Activated CD8-positive, alpha-beta T cell treated with anti-CD3 and anti-CD28 coated beads, Interleukin-2, amount 10 ng/mL, durations not matched to agents 7 days and 5 days (primary cell): ENCODE measurements at regions of chr1 and their contacts with region 1.

Region 1: GRCh38 chr1:155244368-155245162 is 10.7 kb downstream of the ENTREP3 start:
- DNase-seq: peak; percentile 100
- ATAC-seq: peak; percentile 97
- H3K4me3 Mint-ChIP-seq: peak overlapping the region; percentile 69
- H3K27ac Mint-ChIP-seq: peak overlapping the region; percentile 90
- H3K4me1 Mint-ChIP-seq: peaks cover 52% of the 10 kb centered on the region
- H3K27me3 Mint-ChIP-seq: peaks cover 2% of the 10 kb centered on the region

Region 2: DNA sequence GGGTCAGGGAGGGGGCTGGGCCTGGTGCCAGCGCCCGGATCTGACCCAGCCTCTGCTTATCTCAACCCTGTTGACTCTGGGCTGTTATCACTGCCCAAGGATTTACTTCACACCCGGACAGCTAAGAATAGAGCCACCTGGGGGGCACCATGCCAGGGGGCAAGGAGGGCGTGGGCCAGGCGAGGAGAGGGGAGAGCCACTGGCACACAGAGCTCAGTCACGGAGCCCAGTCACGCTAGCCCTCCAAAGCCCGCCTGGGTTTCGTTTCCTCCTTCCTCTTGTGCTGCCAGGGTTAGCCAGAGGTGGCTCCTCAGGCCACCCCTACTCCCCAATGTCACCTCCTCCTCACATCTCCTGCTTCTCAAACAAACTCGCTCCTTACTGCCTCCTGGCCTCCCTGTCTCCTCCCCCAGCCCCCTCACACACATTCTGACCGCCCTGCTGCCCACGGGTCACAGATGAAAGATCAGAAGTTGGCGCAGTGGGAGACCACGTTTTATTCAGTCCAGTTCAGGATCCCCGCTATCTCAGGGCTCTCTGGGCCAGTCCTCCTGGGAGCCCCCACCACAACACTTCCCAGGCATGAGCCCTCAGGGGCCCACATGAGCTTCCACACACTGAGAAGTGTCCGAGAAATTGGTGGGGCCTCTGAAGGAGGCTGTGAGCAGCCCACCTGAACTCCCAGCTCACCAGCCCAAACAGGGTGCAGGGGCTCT is 59.1 kb before region 1 on chr1:
- CTCF ChIA-PET with region 1: no interaction called
- POLR2A ChIA-PET with region 1: no interaction called
- DNase-seq: no peak
- ATAC-seq: no peak
- H3K4me3 Mint-ChIP-seq: no peak overlapping the region
- H3K27ac Mint-ChIP-seq: peak overlapping the region; percentile 6
- H3K4me1 Mint-ChIP-seq: peaks cover 11% of the 10 kb centered on the region
- H3K27me3 Mint-ChIP-seq: no peaks in the 10 kb centered on the region

Region 3: DNA sequence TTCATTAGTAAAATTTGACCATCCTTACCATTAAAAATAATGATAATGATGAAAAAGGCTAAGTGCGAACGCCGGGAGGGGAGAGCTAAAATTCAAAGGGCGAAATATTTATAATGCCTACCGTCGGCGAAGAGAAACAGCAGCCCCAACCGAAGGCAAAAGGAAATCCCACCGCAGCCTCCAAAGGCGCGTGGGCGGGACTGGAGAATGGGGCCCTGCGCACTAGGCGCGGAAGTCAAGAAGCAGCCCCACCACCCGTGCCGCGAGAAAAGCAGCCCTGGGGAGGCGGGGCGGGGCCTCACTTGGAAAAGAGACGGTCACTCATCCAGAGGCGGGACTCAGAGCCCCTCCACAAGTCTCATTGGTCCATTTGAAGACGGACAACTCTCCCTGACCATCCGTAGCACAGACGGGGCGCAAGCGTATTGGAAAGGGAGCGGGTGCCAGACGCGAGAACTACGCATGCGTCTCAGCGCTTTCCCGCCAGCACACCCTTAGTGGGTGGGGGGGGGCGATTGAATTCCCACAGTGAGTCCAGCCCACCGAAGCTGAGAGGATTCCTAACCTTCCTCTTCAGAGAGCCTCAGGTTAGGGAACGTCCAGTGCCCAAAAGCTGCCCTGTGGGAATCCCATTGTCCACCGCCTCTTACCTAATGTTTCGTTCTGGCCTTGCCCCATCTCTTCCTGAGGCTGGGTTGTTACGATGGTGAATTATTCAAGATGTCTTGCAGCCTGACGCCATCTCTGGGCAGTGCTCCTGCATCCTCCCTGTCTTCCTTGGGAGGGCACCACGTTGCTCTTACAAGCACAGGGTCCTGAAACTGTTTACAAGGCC is 17.1 kb before region 1 on chr1:
- CTCF ChIA-PET with region 1: interaction called, 30 read pairs
- POLR2A ChIA-PET with region 1: interaction called, 23 read pairs
- DNase-seq: peak; percentile 99
- ATAC-seq: peak; percentile 96
- H3K4me3 Mint-ChIP-seq: peak overlapping the region; percentile 91
- H3K27ac Mint-ChIP-seq: peak overlapping the region; percentile 94
- H3K4me1 Mint-ChIP-seq: peaks cover 33% of the 10 kb centered on the region
- H3K27me3 Mint-ChIP-seq: no peaks in the 10 kb centered on the region

Region 4: DNA sequence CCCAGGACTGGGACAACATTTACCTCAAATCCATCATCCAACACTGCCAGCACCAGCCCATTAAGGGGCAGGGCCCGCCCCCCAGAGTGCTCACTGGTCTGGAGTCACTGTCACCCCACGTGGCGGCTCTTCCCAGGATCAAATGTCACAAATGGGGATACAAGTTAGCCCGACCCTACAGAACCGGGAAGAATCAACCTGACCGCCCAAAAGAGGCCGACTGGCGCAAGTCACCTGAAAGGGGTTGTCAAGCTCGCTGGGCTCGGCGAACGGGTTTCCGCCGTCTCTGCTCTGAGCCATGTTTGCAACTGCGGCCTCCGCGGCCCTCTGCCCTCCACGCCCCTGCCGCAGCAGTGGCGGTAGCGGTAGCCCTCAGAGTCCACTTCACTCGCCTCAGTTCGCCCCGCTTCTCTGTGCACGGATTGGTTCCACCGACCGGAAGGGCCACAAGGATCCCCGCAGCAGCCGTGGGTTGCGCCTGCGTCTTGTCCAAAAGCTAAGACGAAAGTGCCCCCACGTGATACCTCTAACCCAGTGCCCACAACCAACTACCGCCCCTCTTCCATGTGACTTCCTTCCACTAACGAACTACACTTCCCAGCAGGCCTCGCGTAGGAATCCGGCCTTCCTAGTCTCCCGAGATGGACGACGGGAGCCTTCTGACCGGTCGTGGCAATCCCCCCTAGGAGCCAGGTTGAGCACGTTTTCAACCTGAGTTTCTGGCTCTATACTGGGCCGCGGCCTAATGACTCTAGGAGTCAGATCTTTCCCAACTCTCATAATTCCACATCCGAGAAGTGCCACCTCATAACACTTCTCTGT is 17.5 kb after region 1 on chr1 and contains the start of gene SCAMP3:
- CTCF ChIA-PET with region 1: interaction called, 120 read pairs
- POLR2A ChIA-PET with region 1: interaction called, 20 read pairs
- DNase-seq: peak; percentile 94
- ATAC-seq: peak; percentile 95
- H3K4me3 Mint-ChIP-seq: peak within 1 kb of the TSS; percentile 98
- H3K27ac Mint-ChIP-seq: peak within 1 kb of the TSS; percentile 93
- H3K4me1 Mint-ChIP-seq: peaks cover 42% of the 10 kb centered on the region
- H3K27me3 Mint-ChIP-seq: no peaks in the 10 kb centered on the region
- total RNA-seq, gene SCAMP3: 77.9 to 84.2 TPM

Region 5: DNA sequence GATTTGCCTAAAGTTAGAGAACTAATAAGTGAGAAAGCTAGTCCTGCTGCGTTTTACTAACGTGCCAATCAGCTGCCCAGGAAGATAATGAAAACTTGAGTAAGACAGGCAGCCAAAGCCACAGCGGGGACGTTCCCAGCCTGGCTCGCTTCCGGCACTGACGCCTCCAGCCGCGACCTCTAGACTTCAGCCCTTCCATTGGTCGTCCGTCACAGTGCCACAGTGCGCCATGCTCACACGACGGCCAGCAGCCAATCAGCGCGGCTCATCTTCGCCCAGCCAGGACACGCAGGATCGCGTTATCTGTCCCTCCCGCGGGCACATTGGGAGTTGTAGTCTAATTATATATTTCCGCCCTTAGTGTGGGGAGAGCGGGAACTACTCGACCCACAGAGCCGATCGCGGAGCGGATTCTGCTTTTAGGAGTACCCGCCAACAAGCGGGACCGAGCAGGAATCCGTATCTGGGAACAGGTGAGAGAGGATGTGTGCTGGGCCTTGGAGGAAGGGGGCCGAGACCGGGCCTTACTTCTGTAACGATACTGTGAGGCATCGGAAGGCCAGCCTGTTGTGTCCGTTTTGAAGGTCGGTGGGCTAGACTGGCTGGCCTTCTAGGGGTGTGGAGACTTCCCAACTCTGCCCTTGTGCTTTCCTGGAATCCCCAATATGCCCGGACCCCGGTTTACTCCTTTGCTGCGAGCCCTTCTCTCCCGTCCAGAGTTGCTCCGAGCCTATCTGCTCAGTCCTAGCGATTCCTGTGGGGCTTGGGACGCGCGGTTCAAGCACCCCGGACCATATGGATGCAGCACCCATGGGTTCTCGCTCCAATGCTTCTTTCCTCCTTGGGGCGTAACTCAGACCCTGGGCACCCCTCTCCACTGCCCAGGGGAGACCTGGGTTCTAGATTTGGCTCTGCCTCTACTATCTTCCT is 64.2 kb after region 1 on chr1 and contains the start of gene FDPS:
- CTCF ChIA-PET with region 1: interaction called, 81 read pairs
- POLR2A ChIA-PET with region 1: interaction called, 14 read pairs
- DNase-seq: peak; percentile 99
- ATAC-seq: peak; percentile 99
- H3K4me3 Mint-ChIP-seq: peak within 1 kb of the TSS; percentile 98
- H3K27ac Mint-ChIP-seq: peak within 1 kb of the TSS; percentile 93
- H3K4me1 Mint-ChIP-seq: peaks cover 42% of the 10 kb centered on the region
- H3K27me3 Mint-ChIP-seq: no peaks in the 10 kb centered on the region
- total RNA-seq, gene FDPS: 270 to 271 TPM

Region 6: DNA sequence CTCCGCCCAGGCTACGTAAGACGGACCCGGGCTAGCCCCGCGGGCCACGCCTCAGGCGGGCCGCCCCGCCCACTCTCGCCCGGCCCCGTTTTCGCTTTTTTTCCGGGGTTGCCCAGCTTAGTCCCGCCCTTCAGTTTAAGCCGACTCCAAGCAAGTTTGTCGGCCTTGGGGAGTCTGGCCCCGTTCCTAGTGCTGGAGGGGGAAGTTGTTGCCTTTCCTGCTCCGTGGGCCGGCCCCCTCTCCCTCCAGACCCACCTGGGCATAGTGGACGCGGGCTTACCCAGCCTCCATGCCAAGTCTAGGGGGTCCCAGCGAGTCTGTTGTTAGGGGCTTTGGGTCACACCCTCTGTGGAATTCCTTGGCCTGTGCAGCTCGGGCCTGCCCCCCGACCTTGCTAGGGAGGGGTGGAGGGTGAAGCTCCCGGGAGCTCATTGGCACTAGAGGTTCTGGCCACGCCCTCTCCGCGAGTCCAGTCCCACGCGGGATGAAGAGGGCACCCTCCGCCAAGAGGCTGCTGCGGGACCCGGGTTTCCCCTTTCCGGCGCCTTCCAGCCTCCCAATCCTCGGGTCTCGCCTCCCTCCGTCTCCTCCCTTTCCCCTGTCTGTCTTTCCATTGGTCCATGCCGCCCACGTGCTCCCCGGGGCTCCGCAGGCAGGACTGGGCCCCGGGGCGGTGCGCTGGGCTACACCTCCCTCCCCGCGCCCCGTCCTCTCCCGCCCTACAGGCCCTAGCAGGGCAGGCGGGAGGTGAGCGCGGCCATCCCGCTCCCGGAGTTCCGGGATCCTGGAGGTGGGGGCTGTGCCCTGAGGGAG is 79.4 kb after region 1 on chr1:
- CTCF ChIA-PET with region 1: interaction called, 190 read pairs
- POLR2A ChIA-PET with region 1: interaction called, 18 read pairs
- DNase-seq: peak; percentile 93
- ATAC-seq: peak; percentile 86
- H3K4me3 Mint-ChIP-seq: peak overlapping the region; percentile 83
- H3K27ac Mint-ChIP-seq: peak overlapping the region; percentile 77
- H3K4me1 Mint-ChIP-seq: peaks cover 47% of the 10 kb centered on the region
- H3K27me3 Mint-ChIP-seq: no peaks in the 10 kb centered on the region